Activated CD4-positive, alpha-beta T cell treated with anti-CD3 and anti-CD28 coated beads for 36 hours (primary cell): ENCODE measurements at regions of chr4 and their contacts with region 1.

Region 1: DNA sequence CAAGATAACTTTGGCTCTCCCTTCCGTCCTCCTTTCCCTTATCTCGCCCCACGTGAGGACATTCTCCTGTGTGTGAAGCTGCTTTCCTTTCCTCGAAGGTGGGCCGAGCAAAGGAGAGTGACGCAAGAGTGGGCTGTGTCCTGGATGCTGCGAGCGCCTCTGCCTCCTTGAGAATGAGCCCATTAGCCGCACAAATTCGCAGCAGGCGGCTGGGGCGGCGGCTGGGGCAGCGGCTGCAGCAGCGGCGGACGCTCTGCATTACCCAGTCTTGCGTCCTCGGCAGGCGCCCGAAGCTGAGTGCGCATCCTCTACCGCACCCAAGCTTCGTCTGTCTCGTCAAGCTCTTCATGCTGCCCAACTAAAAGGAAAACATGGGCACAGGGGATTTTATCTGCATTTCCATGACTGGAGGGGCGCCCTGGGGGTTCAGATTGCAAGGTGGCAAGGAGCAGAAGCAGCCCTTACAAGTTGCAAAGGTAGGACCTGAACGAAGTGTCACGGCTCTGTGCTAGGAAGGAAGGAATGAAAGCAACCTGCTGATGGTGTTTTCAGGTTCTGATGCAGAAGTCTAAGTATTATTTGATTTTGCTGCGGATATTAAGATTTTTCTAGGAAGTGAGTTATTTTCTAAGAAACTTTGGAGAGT is at the start of gene SYNPO2:
- DNase-seq: peak; percentile 66
- ATAC-seq: peak; percentile 89
- H3K4me3 Mint-ChIP-seq: peak within 1 kb of the TSS; percentile 70
- H3K27ac Mint-ChIP-seq: no peak within 1 kb of the TSS
- H3K4me1 Mint-ChIP-seq: peaks cover 12% of the 10 kb centered on the region
- H3K27me3 Mint-ChIP-seq: peaks cover 37% of the 10 kb centered on the region
- total RNA-seq, gene SYNPO2: 0.16 to 0.28 TPM

Region 2: GRCh38 chr4:118417325-118417724 is 471.5 kb before region 1 on chr4:
- CTCF ChIA-PET with region 1: no interaction called
- POLR2A ChIA-PET with region 1: no interaction called
- intact Hi-C with region 1: loop called in 1 of 2 experiments (anchors 10 kb)
- DNase-seq: no peak
- ATAC-seq: no peak
- H3K4me3 Mint-ChIP-seq: no peak overlapping the region
- H3K27ac Mint-ChIP-seq: no peak overlapping the region
- H3K4me1 Mint-ChIP-seq: no peaks in the 10 kb centered on the region
- H3K27me3 Mint-ChIP-seq: peaks cover 3% of the 10 kb centered on the region

Region 3: GRCh38 chr4:118740869-118741268 is 147.9 kb before region 1 on chr4:
- CTCF ChIA-PET with region 1: interaction called, 4 read pairs
- POLR2A ChIA-PET with region 1: no interaction called
- intact Hi-C with region 1: loop called in 1 of 2 experiments (anchors 1 kb)
- DNase-seq: no peak
- ATAC-seq: no peak
- H3K4me3 Mint-ChIP-seq: no peak overlapping the region
- H3K27ac Mint-ChIP-seq: no peak overlapping the region
- H3K4me1 Mint-ChIP-seq: no peaks in the 10 kb centered on the region
- H3K27me3 Mint-ChIP-seq: no peaks in the 10 kb centered on the region

Region 4: GRCh38 chr4:119238068-119238722 is 349.4 kb after region 1 on chr4:
- CTCF ChIA-PET with region 1: no interaction called
- POLR2A ChIA-PET with region 1: no interaction called
- intact Hi-C with region 1: no loop called
- DNase-seq: peak; percentile 46
- ATAC-seq: peak; percentile 98
- H3K4me3 Mint-ChIP-seq: peak overlapping the region; percentile 24
- H3K27ac Mint-ChIP-seq: peak overlapping the region; percentile 75
- H3K4me1 Mint-ChIP-seq: peaks cover 44% of the 10 kb centered on the region
- H3K27me3 Mint-ChIP-seq: no peaks in the 10 kb centered on the region